ENCODE measurements at regions of chr11 and their contacts with region 1.

Region 1: GRCh38 chr11:57493507-57494503 is 21.7 kb downstream of the SLC43A1 start:
- DNase-seq: peak; percentile 91
- H3K4me3 ChIP-seq: no peak overlapping the region
- H3K27ac ChIP-seq: peak overlapping the region; percentile 75
- H3K4me1 ChIP-seq: peaks cover 16% of the 10 kb centered on the region
- CTCF ChIP-seq: peak; percentile 96

Region 2: GRCh38 chr11:57131080-57131790 is 362.6 kb before region 1 on chr11:
- CTCF ChIA-PET with region 1: no interaction called
- POLR2A ChIA-PET with region 1: no interaction called
- intact Hi-C with region 1: no loop called
- DNase-seq: no peak
- H3K4me3 ChIP-seq: no peak overlapping the region
- H3K27ac ChIP-seq: no peak overlapping the region
- H3K4me1 ChIP-seq: no peaks in the 10 kb centered on the region
- CTCF ChIP-seq: peak; percentile 46

Region 3: GRCh38 chr11:57480409-57481137 is 13.2 kb before region 1 on chr11:
- CTCF ChIA-PET with region 1: interaction called, 18 read pairs
- POLR2A ChIA-PET with region 1: interaction called, 7 read pairs
- intact Hi-C with region 1: no loop called
- DNase-seq: peak; percentile 74
- H3K4me3 ChIP-seq: no peak overlapping the region
- H3K27ac ChIP-seq: no peak overlapping the region
- H3K4me1 ChIP-seq: peaks cover 73% of the 10 kb centered on the region
- CTCF ChIP-seq: peak; percentile 86

Region 4: GRCh38 chr11:57504511-57504910 is 10.7 kb after region 1 on chr11:
- CTCF ChIA-PET with region 1: interaction called, 10 read pairs
- POLR2A ChIA-PET with region 1: interaction called, 42 read pairs
- intact Hi-C with region 1: no loop called
- DNase-seq: no peak
- H3K4me3 ChIP-seq: no peak overlapping the region
- H3K27ac ChIP-seq: no peak overlapping the region
- H3K4me1 ChIP-seq: no peaks in the 10 kb centered on the region
- CTCF ChIP-seq: no peak

Region 5: GRCh38 chr11:57515332-57516060 is 21.7 kb after region 1 on chr11 and contains the start of gene SLC43A1:
- CTCF ChIA-PET with region 1: interaction called, 25 read pairs
- POLR2A ChIA-PET with region 1: interaction called, 64 read pairs
- intact Hi-C with region 1: loop called (anchors 1 kb)
- DNase-seq: peak; percentile 63
- H3K4me3 ChIP-seq: peak within 1 kb of the TSS; percentile 91
- H3K27ac ChIP-seq: peak within 1 kb of the TSS; percentile 65
- H3K4me1 ChIP-seq: peaks cover 43% of the 10 kb centered on the region
- CTCF ChIP-seq: 0 out of 2 replicates have a peak, but pooled peaks have one; percentile 31
- total RNA-seq, gene SLC43A1: 47.1 and 61.1 TPM in 2 replicates

Region 6: GRCh38 chr11:57574061-57574460 is 80.3 kb after region 1 on chr11:
- CTCF ChIA-PET with region 1: no interaction called
- POLR2A ChIA-PET with region 1: no interaction called
- intact Hi-C with region 1: no loop called
- DNase-seq: no peak
- H3K4me3 ChIP-seq: no peak overlapping the region
- H3K27ac ChIP-seq: no peak overlapping the region
- H3K4me1 ChIP-seq: no peaks in the 10 kb centered on the region
- CTCF ChIP-seq: no peak

Measured in OCI-LY7 (cell line).